Sigmoid colon (tissue), 7 donors: ENCODE measurements at regions of chr11 and their contacts with region 1.

Region 1: DNA sequence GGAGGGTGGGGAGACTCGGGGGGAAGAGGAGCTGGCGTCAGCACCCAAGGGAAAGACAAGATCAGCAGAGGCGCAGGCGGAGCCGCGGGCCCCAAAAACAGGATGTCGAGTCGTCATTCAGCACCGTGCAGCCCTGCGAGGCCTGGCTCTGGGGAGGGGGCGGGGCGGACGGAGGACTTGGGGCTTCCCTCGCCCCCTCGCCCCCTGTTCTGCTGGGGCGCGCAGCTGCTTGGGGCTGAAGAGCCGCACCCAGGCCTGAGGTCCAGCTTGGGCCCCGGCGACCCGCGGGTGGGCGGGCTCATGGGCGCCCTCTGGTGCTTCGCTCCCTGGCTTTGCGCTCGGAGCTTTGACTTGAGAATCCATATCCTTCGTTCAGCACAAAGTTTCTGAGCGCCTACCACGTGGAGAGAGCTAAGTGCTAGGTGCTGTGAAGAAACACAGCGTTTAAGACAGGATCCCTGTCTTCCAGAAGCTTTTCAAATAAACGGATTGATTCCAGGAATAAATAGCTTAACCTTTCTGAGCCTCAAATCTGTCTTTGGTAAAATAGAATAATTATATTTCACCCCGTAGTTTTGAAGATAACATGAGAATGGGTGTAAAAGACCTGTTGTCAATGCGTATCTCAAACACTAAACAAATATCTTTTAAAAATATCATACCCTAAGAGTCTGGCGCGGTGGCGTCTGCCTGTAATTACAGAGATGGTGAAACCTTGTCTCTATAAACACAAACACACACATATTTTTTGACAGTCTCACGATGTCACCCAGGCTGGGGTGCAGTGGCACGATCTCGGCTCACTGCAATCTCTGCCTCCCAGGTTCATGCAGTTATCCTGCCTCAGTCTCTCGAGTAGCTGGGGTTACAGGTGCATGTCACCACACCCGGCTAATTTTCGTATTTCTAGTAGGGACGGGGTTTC is 929 bp upstream of the RHOG start:
- DNase-seq: peak; percentile 92
- H3K4me3 ChIP-seq: peak overlapping the region; percentile 83 to 99 (median 92)
- H3K27ac ChIP-seq: peak overlapping the region; percentile 95 to 99 (median 98)
- H3K4me1 ChIP-seq: peaks cover 0 to 44% (median 31%) of the 10 kb centered on the region in 4 donors
- H3K27me3 ChIP-seq: no peaks in the 10 kb centered on the region
- CTCF ChIP-seq: peak; percentile 57 to 78 (median 64)
- EP300 ChIP-seq: no peak
- POLR2A ChIP-seq: peak in 1 of 2 donors; percentile 33

Region 2: DNA sequence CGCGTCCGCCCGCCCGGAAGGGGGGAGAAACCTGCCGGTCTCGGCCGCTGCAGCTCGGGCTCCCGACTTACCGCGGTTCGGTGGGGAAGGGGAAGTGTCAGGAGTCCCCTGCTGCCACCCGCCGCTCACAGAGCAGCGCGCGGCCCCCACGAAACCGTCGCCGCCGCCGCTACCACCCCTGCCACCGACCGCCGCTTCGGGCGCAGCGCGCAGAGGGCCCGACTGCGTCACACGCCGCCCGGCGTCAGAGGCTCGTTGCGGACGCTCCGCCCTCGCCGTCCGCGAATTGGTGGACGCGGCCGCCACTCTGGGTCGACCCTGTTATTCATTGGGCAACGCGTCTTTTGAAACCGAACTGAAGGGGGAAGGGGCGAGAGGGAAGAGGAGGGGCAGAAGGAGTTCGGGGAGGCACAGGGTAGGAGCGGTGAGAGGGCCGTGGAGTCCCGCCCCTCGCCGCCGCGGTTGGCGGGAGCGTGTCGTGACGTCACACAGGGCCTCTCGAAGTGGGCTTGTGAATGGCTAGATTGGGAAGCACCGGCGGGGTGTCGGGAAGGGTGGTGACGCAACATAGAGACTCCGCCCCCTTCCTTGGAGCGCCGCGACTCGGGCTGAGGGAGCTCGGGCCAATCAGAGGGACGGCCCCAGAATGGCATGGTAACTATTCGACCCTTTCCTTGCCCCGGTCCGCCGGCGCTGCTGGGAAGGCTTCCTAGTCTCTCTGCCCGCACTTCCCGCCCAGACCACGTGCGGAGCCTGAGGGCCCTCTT is 44.2 kb before region 1 on chr11 and contains the start of gene NUP98:
- intact Hi-C with region 1: loop called (anchors 2 kb)
- DNase-seq: peak; percentile 100
- H3K4me3 ChIP-seq: peak within 1 kb of the TSS; percentile 74 to 98 (median 87)
- H3K27ac ChIP-seq: peak within 1 kb of the TSS; percentile 93 to 98 (median 95)
- H3K4me1 ChIP-seq: peaks cover 0 to 35% (median 34%) of the 10 kb centered on the region in 4 donors
- H3K27me3 ChIP-seq: no peaks in the 10 kb centered on the region
- CTCF ChIP-seq: no peak
- EP300 ChIP-seq: no peak
- POLR2A ChIP-seq: peak; percentile 97
- total RNA-seq, gene NUP98: 83.5 to 158 (median 126) TPM

Region 3: GRCh38 chr11:3807909-3808860 is 33.5 kb before region 1 on chr11 and contains the start of gene PGAP2:
- intact Hi-C with region 1: loop called (anchors 2 kb)
- DNase-seq: peak; percentile 72
- H3K4me3 ChIP-seq: peak within 1 kb of the TSS; percentile 52 to 75 (median 56)
- H3K27ac ChIP-seq: peak within 1 kb of the TSS; percentile 37 to 53 (median 46)
- H3K4me1 ChIP-seq: peaks cover 0 to 11% (median 7%) of the 10 kb centered on the region in 4 donors
- H3K27me3 ChIP-seq: no peaks in the 10 kb centered on the region
- CTCF ChIP-seq: peak; percentile 45 to 61 (median 56)
- EP300 ChIP-seq: no peak
- POLR2A ChIP-seq: no peak
- total RNA-seq, gene PGAP2: 3.7 to 7.1 (median 4.5) TPM

Region 4: GRCh38 chr11:3939211-3939610 is 97.5 kb after region 1 on chr11:
- intact Hi-C with region 1: no loop called
- DNase-seq: no peak
- H3K4me3 ChIP-seq: no peak overlapping the region
- H3K27ac ChIP-seq: peak overlapping the region in 1 of 4 donors; percentile 47
- H3K4me1 ChIP-seq: peaks cover 0 to 46% (median 29%) of the 10 kb centered on the region in 4 donors
- H3K27me3 ChIP-seq: no peaks in the 10 kb centered on the region
- CTCF ChIP-seq: no peak
- EP300 ChIP-seq: no peak
- POLR2A ChIP-seq: no peak

Region 5: DNA sequence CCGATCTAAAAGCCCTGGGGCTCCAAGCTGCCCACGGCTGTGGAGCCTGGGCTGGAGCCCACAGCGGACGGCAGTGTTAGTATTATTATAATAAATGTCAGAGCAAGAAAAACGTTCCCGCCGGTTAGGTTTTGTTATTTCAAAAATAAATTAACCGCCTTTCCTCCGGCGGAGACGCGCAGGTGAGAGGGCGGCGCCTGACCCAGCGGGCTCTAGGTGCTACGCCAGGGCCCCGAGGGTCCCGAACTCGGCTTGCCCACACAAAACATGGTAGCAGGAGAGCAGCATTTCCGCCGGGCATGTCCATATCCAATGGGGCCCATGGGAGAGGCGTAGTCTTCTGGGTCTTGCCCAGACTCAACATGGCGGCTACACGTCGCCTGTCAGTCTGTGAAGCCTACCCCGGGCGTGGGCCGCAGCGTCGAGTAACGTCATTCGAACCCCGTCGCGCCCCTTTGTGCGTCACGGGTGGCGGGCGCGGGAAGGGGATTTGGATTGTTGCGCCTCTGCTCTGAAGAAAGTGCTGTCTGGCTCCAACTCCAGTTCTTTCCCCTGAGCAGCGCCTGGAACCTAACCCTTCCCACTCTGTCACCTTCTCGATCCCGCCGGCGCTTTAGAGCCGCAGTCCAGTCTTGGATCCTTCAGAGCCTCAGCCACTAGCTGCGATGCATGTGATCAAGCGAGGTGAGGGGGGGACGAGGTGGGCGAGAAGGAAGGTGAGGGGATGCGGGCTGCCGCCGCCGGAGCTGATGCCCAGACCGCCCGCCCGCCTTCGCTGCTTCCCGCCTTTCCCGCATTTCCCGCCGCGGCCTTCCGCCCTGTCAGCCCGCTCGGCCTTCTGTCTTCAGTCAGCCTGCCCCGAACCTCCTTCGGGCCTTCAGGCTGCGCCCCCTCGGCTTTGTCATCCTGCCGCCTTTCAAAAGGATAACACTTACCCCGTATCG is 252.9 kb after region 1 on chr11 and contains the start of gene RRM1:
- intact Hi-C with region 1: loop called (anchors 5 kb)
- DNase-seq: peak; percentile 98
- H3K4me3 ChIP-seq: peak within 1 kb of the TSS; percentile 71 to 82 (median 76)
- H3K27ac ChIP-seq: peak within 1 kb of the TSS; percentile 91 to 95 (median 92)
- H3K4me1 ChIP-seq: peaks cover 0 to 24% (median 17%) of the 10 kb centered on the region in 4 donors
- H3K27me3 ChIP-seq: no peaks in the 10 kb centered on the region
- CTCF ChIP-seq: no peak
- EP300 ChIP-seq: peak in 1 of 4 donors; percentile 46
- POLR2A ChIP-seq: peak in 1 of 2 donors; percentile 40
- total RNA-seq, gene RRM1: 23.7 to 39.6 (median 28.7) TPM